ENCODE measurements at regions of chr1 and their contacts with region 1.

Region 1: DNA sequence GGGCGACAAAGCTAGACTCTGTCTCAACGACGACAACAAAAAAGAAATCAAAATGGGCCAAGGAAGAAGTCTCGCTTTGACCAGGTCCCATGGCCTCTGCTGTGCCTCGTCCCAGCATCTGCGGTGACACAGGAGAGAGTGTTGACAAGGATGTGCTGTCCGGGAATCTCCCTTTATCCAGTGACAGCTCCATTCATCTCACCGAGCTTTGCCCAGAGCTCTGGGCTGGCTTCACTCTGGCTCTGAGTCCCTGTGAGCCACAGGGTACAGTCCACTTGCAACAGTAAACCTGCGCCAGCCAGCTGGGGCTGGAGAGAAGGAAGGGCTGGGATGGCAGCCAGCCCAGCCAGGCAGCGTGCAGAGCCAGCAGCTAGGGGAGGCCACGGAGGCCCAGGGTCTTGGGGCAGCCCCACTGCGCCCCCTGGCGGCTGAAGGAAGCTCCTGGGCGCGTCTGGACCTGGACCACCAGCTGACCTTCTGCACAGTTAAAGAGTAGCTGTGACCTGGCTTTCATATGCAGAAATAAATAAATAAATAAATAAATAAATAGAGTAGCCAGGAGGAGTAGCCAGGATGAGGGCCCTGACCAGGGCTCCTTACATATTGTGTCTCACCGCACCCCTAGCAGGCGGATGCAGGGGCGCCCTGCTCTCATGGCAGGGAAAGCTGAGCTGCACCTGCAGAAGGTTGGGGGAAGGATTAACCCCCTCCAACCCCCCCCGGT is 29.7 kb downstream of the ENO1 start:
- DNase-seq: peak; percentile 88 to 95 (median 94)
- ATAC-seq: peak; percentile 99
- H3K4me3 ChIP-seq: peak overlapping the region in 2 of 12 donors; percentile 7 to 8
- H3K27ac ChIP-seq: peak overlapping the region in 9 of 12 donors; percentile 8 to 73 (median 47)
- H3K4me1 ChIP-seq: peaks cover 0 to 35% (median 20%) of the 10 kb centered on the region in 12 donors
- H3K27me3 ChIP-seq: no peaks in the 10 kb centered on the region
- CTCF ChIP-seq: peak; percentile 89 to 97 (median 95)
- POLR2A ChIP-seq: no peak

Region 2: DNA sequence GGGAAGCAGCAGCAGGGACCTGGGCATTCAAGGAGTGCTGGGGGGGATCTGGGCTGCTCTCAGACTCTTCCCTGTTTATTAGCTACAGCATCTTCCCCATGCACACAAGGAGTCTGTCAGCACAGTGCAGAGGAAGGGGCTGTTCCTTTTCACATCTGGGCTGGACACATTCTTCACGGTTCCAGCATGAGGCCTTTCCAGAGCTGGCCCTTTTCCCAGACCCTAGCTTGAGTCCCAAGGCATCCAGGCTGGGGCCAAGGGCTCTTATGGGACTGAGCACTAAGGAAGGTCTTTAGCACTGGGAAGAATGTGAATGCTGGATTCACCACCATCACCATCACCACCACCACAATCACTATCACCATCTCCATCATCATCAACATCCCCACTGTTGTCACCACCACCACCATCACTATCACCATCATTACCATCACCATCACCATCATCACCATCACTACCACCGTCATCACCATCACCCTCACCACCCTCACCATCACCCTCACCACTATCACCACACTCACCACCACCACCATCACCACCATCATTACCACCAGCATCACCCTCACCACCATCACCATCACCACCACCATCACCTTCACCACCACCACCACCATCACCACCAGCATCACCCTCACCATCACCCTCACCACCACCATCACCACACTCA is 858.9 kb before region 1 on chr1:
- intact Hi-C with region 1: loop called in 2 of 10 experiments (anchors 10 kb)
- DNase-seq: no peak
- ATAC-seq: peak; percentile 26 to 38 (median 30)
- H3K4me3 ChIP-seq: no peak overlapping the region
- H3K27ac ChIP-seq: no peak overlapping the region
- H3K4me1 ChIP-seq: peaks cover 0 to 14% (median 0%) of the 10 kb centered on the region in 12 donors
- H3K27me3 ChIP-seq: no peaks in the 10 kb centered on the region
- CTCF ChIP-seq: no peak
- POLR2A ChIP-seq: no peak

Region 3: GRCh38 chr1:8560611-8561544 is 287.9 kb before region 1 on chr1:
- intact Hi-C with region 1: loop called in 9 of 10 experiments (anchors 1 to 10 kb)
- DNase-seq: peak in 2 of 5 donors; percentile 21 to 26
- ATAC-seq: peak in 3 of 4 donors; percentile 63 to 79 (median 69)
- H3K4me3 ChIP-seq: no peak overlapping the region
- H3K27ac ChIP-seq: no peak overlapping the region
- H3K4me1 ChIP-seq: peaks cover 0 to 26% (median 13%) of the 10 kb centered on the region in 12 donors
- H3K27me3 ChIP-seq: no peaks in the 10 kb centered on the region
- CTCF ChIP-seq: peak; percentile 85 to 99 (median 95)
- POLR2A ChIP-seq: no peak

Region 4: GRCh38 chr1:8632102-8632501 is 216.7 kb before region 1 on chr1:
- intact Hi-C with region 1: no loop called
- DNase-seq: no peak
- ATAC-seq: no peak
- H3K4me3 ChIP-seq: no peak overlapping the region
- H3K27ac ChIP-seq: peak overlapping the region in 3 of 12 donors; percentile 4 to 29 (median 9)
- H3K4me1 ChIP-seq: peaks cover 0 to 55% (median 38%) of the 10 kb centered on the region in 12 donors
- H3K27me3 ChIP-seq: no peaks in the 10 kb centered on the region
- CTCF ChIP-seq: no peak
- POLR2A ChIP-seq: no peak

Region 5: DNA sequence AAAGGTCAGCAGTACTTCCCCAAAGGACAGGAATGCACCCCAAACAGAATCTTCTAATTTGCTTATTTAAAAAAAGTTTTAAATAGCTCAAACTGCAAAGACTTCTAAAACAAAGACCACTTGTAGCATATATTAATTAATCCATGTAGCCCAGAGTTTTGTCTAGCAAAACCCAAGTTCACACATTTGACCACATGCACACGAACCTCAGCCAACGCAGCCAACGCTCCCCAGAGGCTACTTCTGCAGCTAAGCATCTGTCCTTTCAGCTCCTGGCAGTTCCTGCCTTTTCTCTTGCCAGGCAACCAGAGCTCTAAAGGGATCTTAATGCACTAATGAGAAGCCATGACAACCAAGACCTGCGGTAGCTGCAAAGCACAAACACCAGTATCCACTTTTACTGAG is 121.0 kb before region 1 on chr1:
- intact Hi-C with region 1: loop called in 6 of 10 experiments (anchors 5 to 10 kb)
- DNase-seq: peak in 3 of 5 donors; percentile 24 to 49 (median 26)
- ATAC-seq: peak in 3 of 4 donors; percentile 48 to 66 (median 55)
- H3K4me3 ChIP-seq: no peak overlapping the region
- H3K27ac ChIP-seq: no peak overlapping the region
- H3K4me1 ChIP-seq: peaks cover 0 to 18% (median 5%) of the 10 kb centered on the region in 12 donors
- H3K27me3 ChIP-seq: no peaks in the 10 kb centered on the region
- CTCF ChIP-seq: no peak
- POLR2A ChIP-seq: no peak

Region 6: GRCh38 chr1:8739377-8739776 is 109.4 kb before region 1 on chr1:
- intact Hi-C with region 1: loop called in 3 of 10 experiments (anchors 10 kb)
- DNase-seq: no peak
- ATAC-seq: no peak
- H3K4me3 ChIP-seq: no peak overlapping the region
- H3K27ac ChIP-seq: no peak overlapping the region
- H3K4me1 ChIP-seq: peaks cover 0 to 13% (median 3%) of the 10 kb centered on the region in 12 donors
- H3K27me3 ChIP-seq: no peaks in the 10 kb centered on the region
- CTCF ChIP-seq: no peak
- POLR2A ChIP-seq: no peak

Region 7: DNA sequence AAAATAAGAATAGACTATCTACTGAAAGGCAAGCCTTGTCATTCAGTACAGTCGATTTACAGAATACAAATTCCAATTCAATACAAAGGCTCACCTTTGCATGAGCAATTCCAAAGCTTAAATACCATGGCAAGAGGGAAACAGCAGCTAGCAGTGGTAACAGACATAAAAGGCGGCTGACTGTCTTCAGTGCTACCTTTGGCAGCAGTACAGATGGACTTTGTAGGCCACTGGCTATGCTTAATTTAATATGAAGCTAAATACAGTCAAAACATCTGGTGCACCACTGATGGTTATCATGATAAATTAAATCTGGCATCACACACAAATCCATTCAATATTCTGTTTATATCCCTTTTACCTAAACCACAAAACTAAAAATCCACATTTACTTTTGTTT is 93.8 kb before region 1 on chr1:
- intact Hi-C with region 1: loop called in 1 of 10 experiments (anchors 10 kb)
- DNase-seq: no peak
- ATAC-seq: peak in 1 of 4 donors; percentile 65
- H3K4me3 ChIP-seq: no peak overlapping the region
- H3K27ac ChIP-seq: no peak overlapping the region
- H3K4me1 ChIP-seq: peaks cover 0 to 29% (median 8%) of the 10 kb centered on the region in 12 donors
- H3K27me3 ChIP-seq: no peaks in the 10 kb centered on the region
- CTCF ChIP-seq: no peak
- POLR2A ChIP-seq: no peak

Region 8: GRCh38 chr1:8817406-8818324 is 31.2 kb before region 1 on chr1 and contains the start of gene RERE:
- intact Hi-C with region 1: loop called in 2 of 10 experiments (anchors 2 to 5 kb)
- DNase-seq: peak; percentile 94 to 98 (median 94)
- ATAC-seq: peak; percentile 98 to 99 (median 99)
- H3K4me3 ChIP-seq: peak within 1 kb of the TSS; percentile 49 to 90 (median 78)
- H3K27ac ChIP-seq: peak within 1 kb of the TSS; percentile 85 to 96 (median 94)
- H3K4me1 ChIP-seq: peaks cover 0 to 59% (median 33%) of the 10 kb centered on the region in 12 donors
- H3K27me3 ChIP-seq: no peaks in the 10 kb centered on the region
- CTCF ChIP-seq: peak in 3 of 12 donors; percentile 14 to 26 (median 25)
- POLR2A ChIP-seq: peak in 1 of 2 donors; percentile 95
- total RNA-seq, gene RERE: 65.9 to 236 (median 135) TPM

Region 9: GRCh38 chr1:9037476-9038337 is 188.9 kb after region 1 on chr1:
- intact Hi-C with region 1: no loop called
- DNase-seq: no peak
- ATAC-seq: no peak
- H3K4me3 ChIP-seq: no peak overlapping the region
- H3K27ac ChIP-seq: no peak overlapping the region
- H3K4me1 ChIP-seq: no peaks in the 10 kb centered on the region
- H3K27me3 ChIP-seq: peaks cover 0 to 9% (median 0%) of the 10 kb centered on the region in 9 donors
- CTCF ChIP-seq: no peak
- POLR2A ChIP-seq: no peak